Transverse colon (tissue), 4 donors: ENCODE measurements at regions of chr21 and their contacts with region 1.

Region 1: GRCh38 chr21:35189077-35189863 is 140.2 kb upstream of the RUNX1 start:
- DNase-seq: no peak
- H3K4me3 ChIP-seq: no peak overlapping the region
- H3K27ac ChIP-seq: peak overlapping the region in 2 of 4 donors; percentile 45 to 47
- H3K4me1 ChIP-seq: peaks cover 0 to 3% (median 0%) of the 10 kb centered on the region in 4 donors
- H3K27me3 ChIP-seq: no peaks in the 10 kb centered on the region
- CTCF ChIP-seq: no peak
- EP300 ChIP-seq: no peak
- POLR2A ChIP-seq: no peak

Region 2: GRCh38 chr21:35051287-35051818 is 137.9 kb before region 1 on chr21:
- in situ Hi-C with region 1: loop called in 1 of 4 experiments (anchors 25 kb)
- intact Hi-C with region 1: no loop called
- DNase-seq: peak; percentile 89
- H3K4me3 ChIP-seq: no peak overlapping the region
- H3K27ac ChIP-seq: peak overlapping the region; percentile 72 to 77 (median 73)
- H3K4me1 ChIP-seq: peaks cover 15 to 42% (median 28%) of the 10 kb centered on the region in 4 donors
- H3K27me3 ChIP-seq: no peaks in the 10 kb centered on the region
- CTCF ChIP-seq: peak; percentile 47 to 80 (median 64)
- EP300 ChIP-seq: no peak
- POLR2A ChIP-seq: peak; percentile 15

Region 3: GRCh38 chr21:35127851-35128250 is 61.4 kb before region 1 on chr21:
- in situ Hi-C with region 1: no loop called
- intact Hi-C with region 1: loop called (anchors 2 kb)
- DNase-seq: no peak
- H3K4me3 ChIP-seq: no peak overlapping the region
- H3K27ac ChIP-seq: no peak overlapping the region
- H3K4me1 ChIP-seq: no peaks in the 10 kb centered on the region
- H3K27me3 ChIP-seq: no peaks in the 10 kb centered on the region
- CTCF ChIP-seq: no peak
- EP300 ChIP-seq: no peak
- POLR2A ChIP-seq: no peak